ENCODE measurements at regions of chr2 and their contacts with region 1.

Region 1: DNA sequence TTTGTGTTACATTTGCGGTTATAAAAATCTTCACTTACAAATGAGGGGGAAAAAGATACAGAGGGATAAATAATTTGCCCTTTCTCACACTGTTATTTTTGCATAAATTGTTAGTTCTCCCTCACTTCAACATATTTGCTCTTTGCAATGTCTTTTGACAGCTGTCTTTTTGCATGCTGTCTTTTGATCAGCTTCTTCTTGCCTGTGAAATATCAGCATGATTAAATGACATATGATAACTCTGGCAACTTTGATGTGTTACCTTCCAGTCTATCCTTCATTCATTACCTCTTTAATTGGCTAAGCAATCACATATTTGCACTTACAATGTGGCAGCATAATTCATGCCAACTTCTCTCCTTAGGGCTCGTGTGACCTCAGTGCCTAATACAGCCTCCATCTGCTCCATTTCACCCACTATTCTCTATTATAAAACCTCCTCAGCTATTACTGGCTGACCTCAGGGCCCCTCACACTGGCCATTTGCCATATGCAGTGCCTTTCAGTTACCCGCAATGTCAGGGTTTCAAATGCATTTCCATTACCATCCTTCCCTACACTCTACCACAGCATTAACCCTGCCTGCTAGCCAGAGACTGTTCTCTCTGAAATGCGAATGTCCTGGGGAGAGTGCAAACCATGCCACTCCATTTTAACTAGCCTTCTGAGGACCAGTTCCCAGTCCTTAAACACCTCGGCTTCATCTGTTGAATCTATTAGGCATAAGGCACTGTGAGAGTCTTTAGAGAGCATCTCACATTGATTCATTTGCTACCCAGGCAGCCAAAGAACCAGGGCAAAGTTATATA is 1056.6 kb upstream of the CHAC2 start:
- DNase-seq: no peak
- H3K4me3 ChIP-seq: no peak overlapping the region
- H3K27ac ChIP-seq: no peak overlapping the region
- H3K4me1 ChIP-seq: no peaks in the 10 kb centered on the region
- H3K27me3 ChIP-seq: no peaks in the 10 kb centered on the region
- CTCF ChIP-seq: no peak
- POLR2A ChIP-seq: no peak

Region 2: DNA sequence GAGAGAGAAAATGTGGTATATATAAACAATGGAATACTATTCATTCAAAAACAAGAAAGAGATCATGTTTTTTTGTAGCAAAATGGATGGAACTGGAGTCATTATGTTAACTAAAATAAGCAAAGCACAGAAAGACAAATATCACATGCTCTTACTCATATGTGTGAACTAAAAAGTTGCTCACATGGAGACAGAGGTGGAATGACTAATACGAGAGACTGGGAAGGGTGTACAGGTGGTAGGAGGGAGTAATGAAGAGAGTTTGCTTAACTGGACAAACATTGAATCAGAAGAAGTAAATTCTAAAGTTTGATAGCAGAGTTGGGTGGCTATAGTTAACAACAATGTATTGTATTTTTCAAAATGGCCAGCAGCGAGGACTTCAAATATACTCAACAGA is 24.1 kb before region 1 on chr2:
- intact Hi-C with region 1: loop called (anchors 1 kb)
- DNase-seq: no peak
- H3K4me3 ChIP-seq: no peak overlapping the region
- H3K27ac ChIP-seq: no peak overlapping the region
- H3K4me1 ChIP-seq: no peaks in the 10 kb centered on the region
- H3K27me3 ChIP-seq: no peaks in the 10 kb centered on the region
- CTCF ChIP-seq: no peak
- POLR2A ChIP-seq: no peak

Region 3: DNA sequence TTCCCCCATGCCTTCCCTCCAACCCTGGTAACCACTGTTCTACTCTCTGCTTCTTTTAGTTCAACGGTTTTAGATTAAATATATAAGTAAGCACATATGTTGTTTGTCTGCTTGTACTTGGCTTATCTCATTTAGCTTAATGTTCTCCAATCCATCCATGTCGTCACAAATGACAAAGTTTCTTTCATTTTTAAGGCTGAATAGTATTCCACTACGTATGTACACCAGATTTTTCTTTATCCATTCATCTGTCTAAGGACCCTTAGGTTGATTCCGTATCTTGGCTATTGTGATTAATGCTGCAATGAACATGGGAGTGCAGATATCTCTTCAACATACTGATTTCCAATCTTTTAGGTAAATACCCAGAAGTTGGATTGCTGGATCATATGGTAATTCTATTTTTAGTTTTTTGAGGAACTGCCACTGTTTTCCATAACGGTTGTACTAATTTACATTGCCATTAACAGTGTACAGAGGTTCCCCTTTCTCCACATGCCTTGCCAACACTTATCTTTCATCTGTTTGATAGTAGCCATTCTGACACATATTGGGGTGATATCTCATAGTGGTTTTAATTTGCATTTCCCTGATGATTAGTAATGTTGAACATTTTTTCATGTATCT is 1067.6 kb after region 1 on chr2:
- intact Hi-C with region 1: no loop called
- DNase-seq: no peak
- H3K4me3 ChIP-seq: no peak overlapping the region
- H3K27ac ChIP-seq: no peak overlapping the region
- H3K4me1 ChIP-seq: peaks cover 24% of the 10 kb centered on the region
- H3K27me3 ChIP-seq: no peaks in the 10 kb centered on the region
- CTCF ChIP-seq: no peak
- POLR2A ChIP-seq: no peak

Measured in vagina (tissue), 2 donors.